SK-N-SH (cell line): ENCODE measurements at regions of chr7 and their contacts with region 1.

Region 1: GRCh38 chr7:86814661-86815379 is 171.1 kb downstream of the GRM3 start:
- DNase-seq: peak; percentile 50
- H3K4me3 ChIP-seq: no peak overlapping the region
- H3K27ac ChIP-seq: no peak overlapping the region
- H3K4me1 ChIP-seq: no peaks in the 10 kb centered on the region; a peak in 1 of 4 replicates
- H3K27me3 ChIP-seq: no peaks in the 10 kb centered on the region
- CTCF ChIP-seq: peak; percentile 70
- EP300 ChIP-seq: no peak
- RAD21 ChIP-seq: peak; percentile 87

Region 2: GRCh38 chr7:86664486-86664885 is 150.3 kb before region 1 on chr7:
- CTCF ChIA-PET with region 1: interaction called, 10 read pairs
- POLR2A ChIA-PET with region 1: no interaction called
- DNase-seq: no peak
- H3K4me3 ChIP-seq: no peak overlapping the region
- H3K27ac ChIP-seq: no peak overlapping the region
- H3K4me1 ChIP-seq: no peaks in the 10 kb centered on the region
- H3K27me3 ChIP-seq: no peaks in the 10 kb centered on the region
- CTCF ChIP-seq: no peak
- EP300 ChIP-seq: no peak
- RAD21 ChIP-seq: no peak

Region 3: GRCh38 chr7:86785641-86786040 is 29.2 kb before region 1 on chr7:
- CTCF ChIA-PET with region 1: interaction called, 12 read pairs
- POLR2A ChIA-PET with region 1: no interaction called
- DNase-seq: no peak
- H3K4me3 ChIP-seq: no peak overlapping the region
- H3K27ac ChIP-seq: no peak overlapping the region
- H3K4me1 ChIP-seq: no peaks in the 10 kb centered on the region; a peak in 1 of 4 replicates
- H3K27me3 ChIP-seq: no peaks in the 10 kb centered on the region
- CTCF ChIP-seq: no peak
- EP300 ChIP-seq: no peak
- RAD21 ChIP-seq: no peak

Region 4: GRCh38 chr7:86846494-86847190 is 31.8 kb after region 1 on chr7:
- CTCF ChIA-PET with region 1: interaction called, 13 read pairs
- POLR2A ChIA-PET with region 1: no interaction called
- DNase-seq: no peak
- H3K4me3 ChIP-seq: no peak overlapping the region
- H3K27ac ChIP-seq: no peak overlapping the region
- H3K4me1 ChIP-seq: no peaks in the 10 kb centered on the region
- H3K27me3 ChIP-seq: no peaks in the 10 kb centered on the region
- CTCF ChIP-seq: no peak
- EP300 ChIP-seq: no peak
- RAD21 ChIP-seq: no peak